ENCODE measurements at regions of chr4 and their contacts with region 1.

Region 1: GRCh38 chr4:183471946-183472708 is 27.7 kb downstream of the CDKN2AIP start:
- DNase-seq: peak; percentile 92
- ATAC-seq: peak; percentile 93 to 94

Region 2: GRCh38 chr4:183098723-183099536 is 373.2 kb before region 1 on chr4 and contains the start of gene WWC2:
- intact Hi-C with region 1: no loop called
- DNase-seq: peak; percentile 94
- ATAC-seq: peak; percentile 92 to 94
- total RNA-seq, gene WWC2: 31.5 to 32.3 TPM

Region 3: GRCh38 chr4:183517781-183518180 is 45.7 kb after region 1 on chr4:
- intact Hi-C with region 1: loop called in 1 of 2 experiments (anchors 10 kb)
- DNase-seq: no peak
- ATAC-seq: no peak

Region 4: DNA sequence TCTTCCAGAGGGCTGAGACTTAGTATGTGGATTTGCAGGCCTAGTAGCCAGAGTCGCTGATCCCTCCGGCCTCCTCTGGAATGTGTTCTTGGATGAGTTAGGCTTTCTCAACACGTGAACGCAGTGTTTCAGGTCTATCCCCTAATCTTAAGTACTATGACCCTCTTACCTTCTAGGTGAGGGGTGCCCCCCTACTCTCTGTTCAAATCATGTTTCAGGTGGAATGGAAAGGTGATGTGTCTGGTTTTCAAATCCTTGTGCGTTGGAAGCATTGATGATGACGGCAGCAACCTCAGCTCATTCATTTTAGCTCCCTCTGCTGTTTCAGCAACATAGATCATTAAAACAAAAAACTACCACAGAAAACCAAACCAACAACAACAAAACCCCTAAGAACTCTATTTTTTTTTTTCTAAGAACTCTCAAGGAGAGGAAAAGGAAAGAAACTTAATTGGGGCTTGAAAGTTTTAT is 130.5 kb after region 1 on chr4:
- intact Hi-C with region 1: loop called in 1 of 2 experiments (anchors 2 kb)
- DNase-seq: no peak
- ATAC-seq: no peak

Region 5: GRCh38 chr4:183659029-183659871 is 187.1 kb after region 1 on chr4 and contains the starts of genes RWDD4 and TRAPPC11:
- intact Hi-C with region 1: loop called in 1 of 2 experiments (anchors 10 kb)
- DNase-seq: peak; percentile 98
- ATAC-seq: peak; percentile 100
- total RNA-seq, gene RWDD4: 14.7 to 16.6 TPM
- total RNA-seq, gene TRAPPC11: 19.5 to 21.6 TPM

Measured in left cardiac atrium (tissue), 4 donors.